Heart left ventricle (tissue), 16 donors: ENCODE measurements at regions of chr4 and their contacts with region 1.

Region 1: DNA sequence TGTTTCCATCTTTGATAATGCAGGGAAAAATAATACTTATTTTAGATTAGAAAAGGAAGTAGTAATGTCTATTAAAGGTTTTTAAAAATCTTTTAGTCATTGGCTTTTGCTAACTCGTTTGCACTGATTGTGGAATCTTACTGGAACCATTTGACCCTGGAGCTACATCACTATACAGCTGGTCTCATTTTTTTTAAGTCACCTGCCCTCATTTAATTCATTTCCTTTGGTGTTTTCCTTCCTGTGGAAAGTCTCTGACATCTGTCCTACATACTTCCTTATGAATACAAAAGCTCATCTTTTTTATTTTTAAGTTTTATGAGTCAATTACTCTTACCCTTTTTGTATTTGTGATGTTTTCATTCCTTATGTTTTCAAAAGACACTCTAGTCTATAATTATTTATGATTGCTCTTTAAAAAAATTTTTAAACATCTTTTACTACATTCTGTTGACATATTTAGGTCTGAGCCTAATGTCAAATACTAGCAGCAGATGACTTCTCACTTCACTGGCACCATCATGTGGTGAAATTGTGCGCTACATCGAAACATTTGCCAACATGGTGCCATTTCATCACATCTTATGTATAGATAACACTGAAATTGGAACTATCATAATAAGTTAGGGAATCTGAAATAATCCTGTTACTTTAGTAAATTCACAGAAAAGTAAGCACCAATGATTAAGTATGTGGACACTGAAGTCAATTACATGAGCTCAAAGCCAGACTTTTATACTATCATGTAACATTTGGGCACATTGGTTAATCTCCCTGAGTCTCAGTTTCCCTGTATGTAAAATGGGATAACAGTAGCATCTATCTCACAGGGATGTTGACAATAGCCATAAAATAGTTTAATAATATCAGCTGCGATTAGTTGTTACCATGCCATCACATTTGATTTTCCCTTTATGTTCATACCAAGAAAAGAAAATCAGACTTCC is 9.4 kb upstream of the MMAA start:
- DNase-seq: peak in 3 of 5 donors; percentile 29 to 40 (median 32)
- ATAC-seq: peak in 3 of 4 donors; percentile 56 to 70 (median 59)
- H3K4me3 ChIP-seq: no peak overlapping the region
- H3K27ac ChIP-seq: no peak overlapping the region
- H3K4me1 ChIP-seq: peaks cover 0 to 10% (median 0%) of the 10 kb centered on the region in 12 donors
- H3K27me3 ChIP-seq: no peaks in the 10 kb centered on the region
- CTCF ChIP-seq: peak; percentile 54 to 87 (median 76)
- POLR2A ChIP-seq: no peak

Region 2: DNA sequence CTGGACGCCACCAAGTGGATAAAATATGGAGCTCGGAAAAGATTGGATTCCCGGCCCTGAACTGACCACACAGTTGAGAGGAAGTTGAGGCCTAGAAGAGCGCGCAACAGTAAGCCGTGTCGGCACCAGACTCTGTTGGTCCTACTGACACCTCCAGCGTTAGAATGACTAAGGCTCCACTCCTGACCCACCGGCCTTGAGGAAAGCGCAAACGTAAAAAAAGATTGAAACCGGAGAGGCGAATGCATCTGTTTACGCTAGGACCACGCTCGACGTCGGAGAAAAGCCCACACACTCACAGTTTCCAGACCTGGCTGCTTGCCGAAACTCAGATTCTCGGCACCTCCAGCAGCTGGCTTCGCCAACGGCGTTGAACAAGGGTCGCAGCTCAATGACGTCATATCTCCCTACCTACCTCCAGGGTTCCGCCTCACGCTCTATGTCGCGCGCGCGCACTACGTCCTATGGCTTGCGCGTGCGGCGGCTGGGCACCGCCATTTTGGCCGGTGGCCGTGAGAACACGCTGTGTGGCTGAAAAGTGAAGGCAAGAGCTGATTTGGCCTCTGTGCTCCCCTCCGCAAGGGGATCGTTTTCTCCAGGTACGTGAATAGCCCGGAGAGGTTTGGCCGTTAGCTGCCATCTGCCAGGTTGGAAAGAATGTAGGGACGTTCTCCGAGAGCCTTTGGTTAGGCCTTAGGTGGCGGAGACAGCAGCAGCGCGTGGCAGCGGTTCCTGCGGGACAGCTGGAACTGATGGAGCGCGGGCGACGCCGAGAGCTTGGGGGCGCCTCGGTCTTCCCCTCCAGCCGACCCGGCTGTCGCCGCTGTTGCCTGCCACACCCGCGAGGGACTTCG is 511.7 kb before region 1 on chr4 and contains the starts of genes ABCE1 and ANAPC10:
- intact Hi-C with region 1: loop called in 1 of 10 experiments (anchors 5 kb)
- DNase-seq: peak; percentile 95 to 97 (median 96)
- ATAC-seq: peak; percentile 98 to 99 (median 98)
- H3K4me3 ChIP-seq: peak within 1 kb of the TSS; percentile 58 to 82 (median 70)
- H3K27ac ChIP-seq: peak within 1 kb of the TSS; percentile 73 to 95 (median 91)
- H3K4me1 ChIP-seq: peaks cover 3 to 55% (median 33%) of the 10 kb centered on the region in 12 donors
- H3K27me3 ChIP-seq: no peaks in the 10 kb centered on the region
- CTCF ChIP-seq: peak in 9 of 12 donors; percentile 9 to 50 (median 32)
- POLR2A ChIP-seq: peak in 1 of 2 donors; percentile 41
- total RNA-seq, gene ABCE1: 32.0 to 48.9 (median 40.1) TPM
- total RNA-seq, gene ANAPC10: 12.3 to 26.9 (median 13.6) TPM

Region 3: DNA sequence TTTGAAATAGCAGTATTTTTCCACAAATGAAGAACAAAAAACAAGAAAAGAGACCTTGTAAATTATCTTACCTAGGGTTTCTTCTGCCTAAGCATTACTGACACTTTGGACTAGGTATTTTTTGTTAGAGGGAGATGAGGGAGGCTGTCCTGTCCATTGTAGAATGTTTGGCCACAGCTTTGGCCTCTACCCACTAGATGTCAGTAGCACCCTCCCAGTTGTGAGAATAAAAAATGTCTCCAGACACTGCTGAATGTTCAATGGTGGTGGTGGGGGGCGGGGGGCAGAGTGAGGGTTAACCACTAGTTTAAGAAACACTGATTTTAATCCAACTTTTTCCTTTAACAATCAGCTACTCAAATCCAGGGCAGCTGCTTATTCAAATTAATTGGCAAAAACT is 455.2 kb before region 1 on chr4:
- intact Hi-C with region 1: loop called in 7 of 10 experiments (anchors 2 to 10 kb)
- DNase-seq: no peak
- ATAC-seq: peak; percentile 51 to 86 (median 82)
- H3K4me3 ChIP-seq: no peak overlapping the region
- H3K27ac ChIP-seq: peak overlapping the region in 7 of 12 donors; percentile 21 to 77 (median 57)
- H3K4me1 ChIP-seq: peaks cover 0 to 22% (median 5%) of the 10 kb centered on the region in 12 donors
- H3K27me3 ChIP-seq: no peaks in the 10 kb centered on the region
- CTCF ChIP-seq: peak; percentile 23 to 65 (median 54)
- POLR2A ChIP-seq: no peak

Region 4: GRCh38 chr4:145216535-145216934 is 393.2 kb before region 1 on chr4:
- intact Hi-C with region 1: loop called in 5 of 10 experiments (anchors 1 to 5 kb)
- DNase-seq: no peak
- ATAC-seq: no peak
- H3K4me3 ChIP-seq: no peak overlapping the region
- H3K27ac ChIP-seq: no peak overlapping the region
- H3K4me1 ChIP-seq: peaks cover 0 to 9% (median 0%) of the 10 kb centered on the region in 12 donors
- H3K27me3 ChIP-seq: no peaks in the 10 kb centered on the region
- CTCF ChIP-seq: peak in 11 of 12 donors; percentile 33 to 66 (median 53)
- POLR2A ChIP-seq: no peak

Region 5: DNA sequence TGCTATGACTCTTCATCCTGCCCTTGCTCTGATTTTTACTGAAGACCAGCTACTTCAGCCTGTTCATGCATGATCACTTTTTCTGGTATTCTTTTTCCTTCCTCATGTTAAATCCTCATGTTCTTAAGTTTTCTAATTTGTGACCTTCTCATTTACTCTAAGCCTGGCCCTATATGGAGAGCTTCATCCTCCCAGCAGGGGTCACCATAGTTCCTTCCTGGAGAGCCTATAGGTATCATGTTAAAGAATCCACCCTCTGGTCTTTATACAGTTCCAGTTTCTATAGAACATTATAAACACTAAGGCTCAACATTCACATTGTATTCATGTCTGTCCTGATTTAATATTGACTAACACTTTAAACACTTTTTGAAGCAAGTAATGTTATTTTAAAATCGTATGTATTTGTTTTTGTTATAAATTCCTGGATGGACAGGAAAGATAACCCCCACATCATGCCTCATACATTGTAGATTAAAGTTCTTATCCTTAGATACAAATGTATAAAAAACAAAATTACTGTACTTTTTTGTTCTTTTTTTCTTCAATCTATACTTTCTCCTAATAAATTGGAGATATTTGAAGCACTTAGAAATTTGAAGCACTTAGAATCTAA is 375.6 kb before region 1 on chr4:
- intact Hi-C with region 1: loop called (anchors 1 to 5 kb)
- DNase-seq: peak in 3 of 5 donors; percentile 24 to 44 (median 36)
- ATAC-seq: peak; percentile 73 to 83 (median 81)
- H3K4me3 ChIP-seq: no peak overlapping the region
- H3K27ac ChIP-seq: no peak overlapping the region
- H3K4me1 ChIP-seq: no peaks in the 10 kb centered on the region
- H3K27me3 ChIP-seq: no peaks in the 10 kb centered on the region
- CTCF ChIP-seq: peak; percentile 69 to 84 (median 74)
- POLR2A ChIP-seq: no peak

Region 6: DNA sequence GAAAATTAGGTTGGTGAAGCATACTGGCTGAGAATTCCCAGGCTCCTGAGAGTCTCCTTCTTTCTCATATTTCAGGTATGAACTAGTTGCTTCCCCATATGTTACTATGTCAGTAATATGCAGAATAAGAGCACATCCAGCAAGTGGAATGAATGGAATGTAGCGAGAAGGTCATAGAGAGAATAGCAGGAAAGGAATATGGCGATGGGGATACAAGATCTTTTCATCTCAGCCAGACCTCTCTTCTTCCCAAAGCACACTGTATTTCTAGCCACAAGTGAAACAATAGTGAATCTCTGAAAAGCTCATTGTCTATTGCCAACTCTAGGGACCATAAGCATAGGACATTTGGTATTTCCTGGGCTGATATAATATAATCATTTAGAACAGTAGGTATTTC is 45.2 kb before region 1 on chr4:
- intact Hi-C with region 1: loop called in 2 of 10 experiments (anchors 5 to 10 kb)
- DNase-seq: no peak
- ATAC-seq: no peak
- H3K4me3 ChIP-seq: no peak overlapping the region
- H3K27ac ChIP-seq: no peak overlapping the region
- H3K4me1 ChIP-seq: no peaks in the 10 kb centered on the region
- H3K27me3 ChIP-seq: no peaks in the 10 kb centered on the region
- CTCF ChIP-seq: no peak
- POLR2A ChIP-seq: no peak

Region 7: GRCh38 chr4:145644699-145645098 is 34.9 kb after region 1 on chr4:
- intact Hi-C with region 1: no loop called
- DNase-seq: no peak
- ATAC-seq: no peak
- H3K4me3 ChIP-seq: no peak overlapping the region
- H3K27ac ChIP-seq: no peak overlapping the region
- H3K4me1 ChIP-seq: peaks cover 0 to 9% (median 4%) of the 10 kb centered on the region in 12 donors
- H3K27me3 ChIP-seq: no peaks in the 10 kb centered on the region
- CTCF ChIP-seq: peak in 3 of 12 donors; percentile 7 to 16 (median 14)
- POLR2A ChIP-seq: no peak